Activated CD4-positive, alpha-beta T cell treated with anti-CD3 and anti-CD28 coated beads for 36 hours (primary cell): ENCODE measurements at regions of chr5 and their contacts with region 1.

Region 1: GRCh38 chr5:170747851-170748250 is 35.7 kb upstream of the GABRP start:
- DNase-seq: no peak
- ATAC-seq: no peak
- H3K4me3 Mint-ChIP-seq: no peak overlapping the region
- H3K27ac Mint-ChIP-seq: no peak overlapping the region
- H3K4me1 Mint-ChIP-seq: peaks cover 2% of the 10 kb centered on the region
- H3K27me3 Mint-ChIP-seq: peaks cover 38% of the 10 kb centered on the region

Region 2: DNA sequence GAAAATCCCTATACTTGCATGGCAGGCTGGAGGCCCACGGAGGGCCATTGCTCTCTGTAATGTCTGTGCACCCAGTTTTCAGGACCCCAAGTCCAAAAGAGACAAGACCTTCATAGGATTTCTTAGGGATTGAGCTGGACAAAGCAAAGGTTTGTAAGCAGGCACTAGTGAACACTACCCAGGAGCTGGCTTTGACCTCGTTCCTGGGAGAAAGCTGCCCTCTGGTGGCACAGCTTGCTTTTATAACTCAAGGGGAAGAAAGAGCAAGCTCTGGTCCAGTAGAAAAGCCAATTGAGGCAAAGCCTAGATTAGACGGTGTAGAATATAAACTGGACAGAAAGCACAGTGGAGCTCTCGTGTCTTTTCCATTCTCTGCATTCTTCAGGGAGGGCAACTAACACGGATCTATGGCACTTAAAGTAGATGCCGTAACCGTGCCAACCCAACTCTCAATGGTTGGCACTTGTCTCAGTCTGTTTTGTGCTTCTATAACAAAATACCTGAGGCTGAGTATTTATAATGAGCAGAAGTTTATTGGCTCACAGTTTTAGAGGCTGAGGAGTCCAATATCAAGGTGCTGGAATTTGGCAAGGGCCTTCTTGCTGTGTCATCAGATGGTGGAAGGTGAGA is 43.6 kb after region 1 on chr5:
- CTCF ChIA-PET with region 1: interaction called, 10 read pairs
- POLR2A ChIA-PET with region 1: no interaction called
- intact Hi-C with region 1: loop called in 1 of 2 experiments (anchors 1 kb)
- DNase-seq: peak; percentile 59
- ATAC-seq: no peak
- H3K4me3 Mint-ChIP-seq: no peak overlapping the region
- H3K27ac Mint-ChIP-seq: no peak overlapping the region
- H3K4me1 Mint-ChIP-seq: no peaks in the 10 kb centered on the region
- H3K27me3 Mint-ChIP-seq: no peaks in the 10 kb centered on the region

Region 3: GRCh38 chr5:171149333-171149732 is 401.5 kb after region 1 on chr5:
- CTCF ChIA-PET with region 1: no interaction called
- POLR2A ChIA-PET with region 1: no interaction called
- intact Hi-C with region 1: loop called in 1 of 2 experiments (anchors 10 kb)
- DNase-seq: no peak
- ATAC-seq: no peak
- H3K4me3 Mint-ChIP-seq: no peak overlapping the region
- H3K27ac Mint-ChIP-seq: no peak overlapping the region
- H3K4me1 Mint-ChIP-seq: no peaks in the 10 kb centered on the region
- H3K27me3 Mint-ChIP-seq: peaks cover 6% of the 10 kb centered on the region

Region 4: GRCh38 chr5:171336521-171337209 is 588.8 kb after region 1 on chr5:
- CTCF ChIA-PET with region 1: no interaction called
- POLR2A ChIA-PET with region 1: no interaction called
- intact Hi-C with region 1: loop called (anchors 1 to 5 kb)
- DNase-seq: peak; percentile 60
- ATAC-seq: peak; percentile 61
- H3K4me3 Mint-ChIP-seq: peak overlapping the region; percentile 39
- H3K27ac Mint-ChIP-seq: no peak overlapping the region
- H3K4me1 Mint-ChIP-seq: peaks cover 3% of the 10 kb centered on the region
- H3K27me3 Mint-ChIP-seq: peaks cover 26% of the 10 kb centered on the region

Region 5: GRCh38 chr5:172044631-172045314 is 1296.9 kb after region 1 on chr5:
- CTCF ChIA-PET with region 1: no interaction called
- POLR2A ChIA-PET with region 1: no interaction called
- intact Hi-C with region 1: loop called in 1 of 2 experiments (anchors 5 kb)
- DNase-seq: no peak
- ATAC-seq: no peak
- H3K4me3 Mint-ChIP-seq: no peak overlapping the region
- H3K27ac Mint-ChIP-seq: peak overlapping the region; percentile 21
- H3K4me1 Mint-ChIP-seq: peaks cover 19% of the 10 kb centered on the region
- H3K27me3 Mint-ChIP-seq: no peaks in the 10 kb centered on the region